ENCODE measurements at regions of chr17 and their contacts with region 1.

Region 1: GRCh38 chr17:32877164-32877764 is 340 bp upstream of the MYO1D start:
- DNase-seq: peak; percentile 93 to 94
- H3K4me3 ChIP-seq: peak overlapping the region in 1 of 3 donors; percentile 85
- H3K27ac ChIP-seq: peak overlapping the region; percentile 95 to 99 (median 97)
- H3K4me1 ChIP-seq: peaks cover 4 to 26% of the 10 kb centered on the region in 2 donors
- H3K27me3 ChIP-seq: no peaks in the 10 kb centered on the region
- CTCF ChIP-seq: peak; percentile 71 to 100 (median 88)
- POLR2A ChIP-seq: no peak

Region 2: DNA sequence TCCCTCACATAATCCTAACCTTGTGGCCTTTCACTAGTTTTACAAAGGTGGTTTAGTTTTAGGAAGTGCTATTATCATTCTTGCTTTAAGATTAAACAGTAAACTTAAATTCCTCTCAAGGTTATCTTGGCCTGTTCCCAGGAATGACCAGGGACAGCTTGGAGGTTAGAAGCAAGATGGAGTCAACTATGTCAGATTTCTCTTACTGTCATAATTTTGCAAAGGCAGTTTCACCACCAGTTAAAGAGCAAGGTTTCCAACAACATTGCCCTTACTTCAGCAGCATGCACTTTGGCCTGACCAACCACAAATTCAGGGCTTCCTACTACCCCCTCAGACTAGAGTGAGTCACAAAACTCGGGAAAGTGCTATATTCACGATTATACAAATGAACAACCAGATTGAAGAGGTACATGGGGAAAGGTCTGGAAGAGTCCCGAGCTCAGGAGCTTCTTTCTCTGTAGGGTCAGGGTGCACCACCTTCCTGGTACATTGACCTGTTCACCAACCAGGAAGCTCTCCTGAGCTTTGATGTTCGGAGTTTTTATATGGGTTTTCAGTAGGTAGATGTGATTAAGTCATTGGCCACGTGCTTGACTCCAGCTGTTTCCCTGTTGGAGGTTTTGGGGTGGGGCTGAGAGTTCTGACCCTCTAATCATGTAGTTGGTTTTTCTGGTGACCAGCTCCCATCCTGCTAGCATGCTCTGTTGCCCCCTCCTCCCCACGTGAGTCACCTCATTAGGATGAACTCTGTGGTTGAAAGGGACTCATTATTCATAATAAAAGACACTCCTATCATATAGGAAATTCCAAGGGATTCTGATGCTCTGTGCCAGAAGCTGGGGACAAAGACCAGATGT is 715.5 kb before region 1 on chr17:
- intact Hi-C with region 1: no loop called
- DNase-seq: no peak
- H3K4me3 ChIP-seq: no peak overlapping the region
- H3K27ac ChIP-seq: no peak overlapping the region
- H3K4me1 ChIP-seq: peaks cover 0 to 15% of the 10 kb centered on the region in 2 donors
- H3K27me3 ChIP-seq: no peaks in the 10 kb centered on the region
- CTCF ChIP-seq: no peak
- POLR2A ChIP-seq: no peak

Region 3: GRCh38 chr17:32822996-32823395 is 54.3 kb before region 1 on chr17:
- intact Hi-C with region 1: loop called (anchors 5 kb)
- DNase-seq: peak in 1 of 2 donors; percentile 20
- H3K4me3 ChIP-seq: peak overlapping the region in 1 of 3 donors; percentile 25
- H3K27ac ChIP-seq: peak overlapping the region; percentile 35 to 43 (median 40)
- H3K4me1 ChIP-seq: peaks cover 12 to 41% of the 10 kb centered on the region in 2 donors
- H3K27me3 ChIP-seq: no peaks in the 10 kb centered on the region
- CTCF ChIP-seq: no peak
- POLR2A ChIP-seq: peak in 1 of 2 donors; percentile 32

Region 4: DNA sequence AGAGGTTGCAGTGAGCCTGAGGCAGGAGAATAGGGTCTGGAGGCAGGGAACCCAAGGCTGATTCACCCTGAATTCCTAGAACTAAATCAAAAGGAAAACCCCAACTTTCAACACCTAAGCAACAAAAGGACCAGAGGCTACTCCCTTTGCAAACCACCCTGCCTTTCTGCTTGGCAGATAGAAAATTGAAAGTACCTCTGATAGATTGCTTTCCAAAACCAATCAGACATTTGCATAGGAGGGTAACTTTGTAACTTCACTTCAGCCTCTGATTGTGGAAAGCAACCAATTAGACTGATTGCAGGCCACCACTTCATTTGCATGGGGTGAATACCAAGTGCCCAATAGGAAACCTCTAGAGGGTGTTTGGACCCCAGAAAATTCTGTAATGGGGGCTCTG is 39.8 kb after region 1 on chr17:
- intact Hi-C with region 1: no loop called
- DNase-seq: no peak
- H3K4me3 ChIP-seq: no peak overlapping the region
- H3K27ac ChIP-seq: no peak overlapping the region
- H3K4me1 ChIP-seq: peaks cover under 1 to 1% of the 10 kb centered on the region in 2 donors
- H3K27me3 ChIP-seq: no peaks in the 10 kb centered on the region
- CTCF ChIP-seq: no peak
- POLR2A ChIP-seq: no peak

Region 5: GRCh38 chr17:32936894-32937500 is 59.7 kb after region 1 on chr17:
- intact Hi-C with region 1: loop called (anchors 10 kb)
- DNase-seq: peak; percentile 87 to 88
- H3K4me3 ChIP-seq: no peak overlapping the region
- H3K27ac ChIP-seq: peak overlapping the region; percentile 55 to 81 (median 73)
- H3K4me1 ChIP-seq: peaks cover 6 to 13% of the 10 kb centered on the region in 2 donors
- H3K27me3 ChIP-seq: no peaks in the 10 kb centered on the region
- CTCF ChIP-seq: peak; percentile 88 to 99 (median 92)
- POLR2A ChIP-seq: peak; percentile 25 to 37

Measured in thyroid gland (tissue), 4 donors.